GM12878 (cell line): ENCODE measurements at regions of chr4 and their contacts with region 1.

Region 1: DNA sequence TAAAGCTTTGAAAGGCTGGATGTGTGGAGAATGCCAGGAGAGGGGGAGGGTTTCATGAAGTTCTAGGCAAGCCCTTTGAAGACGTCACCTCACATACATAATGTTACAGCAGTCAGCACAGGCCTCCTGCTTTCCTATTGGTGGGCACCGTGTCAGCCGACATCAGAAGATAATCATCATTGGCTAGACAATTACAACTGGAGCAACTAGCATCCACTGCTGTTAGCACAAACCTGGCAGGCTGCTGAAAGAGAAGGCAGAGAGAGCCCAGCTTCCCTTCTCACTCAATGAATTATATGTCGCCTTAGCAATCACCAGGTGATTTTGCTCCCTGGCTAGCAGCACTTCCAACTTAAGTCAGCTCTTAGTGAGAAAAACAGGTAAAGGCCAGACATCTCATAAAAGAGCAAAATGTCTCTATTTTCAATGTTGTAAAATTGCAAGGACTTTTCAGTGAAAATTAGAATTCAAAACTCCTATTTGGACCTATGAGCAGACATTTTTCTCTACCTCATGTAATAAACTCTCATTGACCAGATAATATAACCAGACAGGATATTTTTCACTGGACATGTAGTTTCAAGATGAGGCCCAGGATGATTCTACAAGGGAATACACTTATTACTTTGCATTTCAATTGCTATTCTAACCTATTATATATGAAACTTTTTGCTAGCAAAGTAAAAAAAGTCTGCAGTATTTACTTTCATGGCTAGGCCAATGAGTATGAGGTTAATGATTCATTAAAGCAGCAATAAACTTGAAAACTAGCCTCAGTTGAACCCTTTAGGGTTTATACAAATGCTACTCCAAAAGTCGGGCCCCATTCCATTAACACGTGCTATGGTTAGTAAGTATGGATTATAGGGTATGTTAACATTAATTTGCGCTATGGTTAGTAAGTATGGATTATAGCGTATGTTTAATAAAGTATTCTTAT is 4.3 kb downstream of the ELOVL6 start:
- DNase-seq: peak; percentile 95
- ATAC-seq: peak; percentile 74
- H3K4me3 ChIP-seq: no peak overlapping the region
- H3K27ac ChIP-seq: peak overlapping the region; percentile 75
- H3K4me1 ChIP-seq: peaks cover 19% of the 10 kb centered on the region
- H3K27me3 ChIP-seq: no peaks in the 10 kb centered on the region
- CTCF ChIP-seq: no peak
- EP300 ChIP-seq: no peak
- POLR2A ChIP-seq: peak; percentile 89
- RAD21 ChIP-seq: no peak

Region 2: GRCh38 chr4:108620101-108620932 is 1573.8 kb before region 1 on chr4 and contains the start of gene RPL34:
- CTCF ChIA-PET with region 1: no interaction called
- POLR2A ChIA-PET with region 1: no interaction called
- RAD21 ChIA-PET with region 1: no interaction called
- SMC1A ChIA-PET with region 1: no interaction called
- in situ Hi-C with region 1: no loop called
- intact Hi-C with region 1: loop called (anchors 5 kb)
- DNase-seq: peak; percentile 98
- ATAC-seq: peak; percentile 98
- H3K4me3 ChIP-seq: peak within 1 kb of the TSS; percentile 92
- H3K27ac ChIP-seq: peak within 1 kb of the TSS; percentile 95
- H3K4me1 ChIP-seq: peaks cover 8% of the 10 kb centered on the region; the same call in 1 of the 2 replicates
- H3K27me3 ChIP-seq: no peaks in the 10 kb centered on the region
- CTCF ChIP-seq: no peak
- EP300 ChIP-seq: no peak; a peak in 1 of 4 replicates
- POLR2A ChIP-seq: peak; percentile 96
- RAD21 ChIP-seq: no peak
- polyA plus RNA-seq, gene RPL34: 6,449 to 6,697 TPM

Region 3: DNA sequence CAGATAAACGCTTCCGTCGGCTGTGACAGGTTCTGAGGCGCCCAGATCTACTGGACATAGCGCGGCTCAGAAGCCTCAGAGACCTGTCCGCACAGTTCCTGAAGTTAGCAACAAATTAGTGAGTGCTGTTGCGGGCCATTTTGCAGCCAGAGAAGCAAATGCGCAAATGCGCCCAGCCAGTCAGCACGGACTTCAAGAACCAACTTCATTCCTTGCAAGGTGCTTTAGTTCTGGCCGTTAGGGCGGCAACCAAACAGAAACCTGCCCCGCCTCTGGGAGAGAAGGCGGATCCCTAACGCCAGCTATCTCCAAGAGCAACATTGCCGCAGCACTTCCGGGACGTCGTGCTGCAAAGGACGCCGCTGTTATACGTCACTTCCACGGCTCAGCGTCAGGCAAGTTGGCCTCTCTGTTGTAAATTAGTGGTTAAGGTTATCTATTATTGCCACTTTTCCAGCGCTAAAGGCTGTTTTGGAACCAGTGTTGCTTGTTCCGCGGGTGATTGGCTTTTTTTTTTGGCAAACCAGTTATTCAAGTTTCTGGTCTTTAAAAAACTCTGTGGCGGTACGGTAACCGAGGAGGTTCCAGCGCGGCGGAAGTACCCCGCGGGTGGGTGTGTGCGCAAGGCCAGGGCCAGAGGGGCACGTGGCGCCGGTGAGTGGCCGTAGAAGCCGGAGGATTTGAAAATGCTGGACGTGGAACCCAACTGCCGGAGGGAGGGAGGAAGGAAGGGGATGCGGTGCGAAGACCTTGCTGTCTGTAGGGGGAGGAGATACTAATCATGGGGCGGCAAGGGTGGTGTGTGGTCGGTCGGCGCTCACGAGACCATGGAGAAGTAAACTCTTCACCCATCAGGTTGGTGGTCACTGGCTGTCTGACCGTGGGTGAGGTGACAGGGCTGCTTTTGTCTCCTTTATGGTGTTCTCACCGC is 378.7 kb before region 1 on chr4 and contains the start of gene GAR1:
- CTCF ChIA-PET with region 1: no interaction called
- POLR2A ChIA-PET with region 1: no interaction called
- RAD21 ChIA-PET with region 1: no interaction called
- SMC1A ChIA-PET with region 1: no interaction called
- in situ Hi-C with region 1: no loop called
- intact Hi-C with region 1: loop called (anchors 10 kb)
- DNase-seq: peak; percentile 72
- ATAC-seq: peak; percentile 94
- H3K4me3 ChIP-seq: peak within 1 kb of the TSS; percentile 96
- H3K27ac ChIP-seq: peak within 1 kb of the TSS; percentile 91
- H3K4me1 ChIP-seq: no peaks in the 10 kb centered on the region
- H3K27me3 ChIP-seq: no peaks in the 10 kb centered on the region
- CTCF ChIP-seq: 0 out of 6 replicates have a peak, but pooled peaks of 1 of the 3 experiments have one; percentile 2
- EP300 ChIP-seq: peak in 1 of 2 experiments; percentile 19; a peak in 1 of 4 replicates
- POLR2A ChIP-seq: peak; percentile 81; the same call in 1 of the 2 replicates
- RAD21 ChIP-seq: no peak
- polyA plus RNA-seq, gene GAR1: 16.6 to 20.5 TPM

Region 4: DNA sequence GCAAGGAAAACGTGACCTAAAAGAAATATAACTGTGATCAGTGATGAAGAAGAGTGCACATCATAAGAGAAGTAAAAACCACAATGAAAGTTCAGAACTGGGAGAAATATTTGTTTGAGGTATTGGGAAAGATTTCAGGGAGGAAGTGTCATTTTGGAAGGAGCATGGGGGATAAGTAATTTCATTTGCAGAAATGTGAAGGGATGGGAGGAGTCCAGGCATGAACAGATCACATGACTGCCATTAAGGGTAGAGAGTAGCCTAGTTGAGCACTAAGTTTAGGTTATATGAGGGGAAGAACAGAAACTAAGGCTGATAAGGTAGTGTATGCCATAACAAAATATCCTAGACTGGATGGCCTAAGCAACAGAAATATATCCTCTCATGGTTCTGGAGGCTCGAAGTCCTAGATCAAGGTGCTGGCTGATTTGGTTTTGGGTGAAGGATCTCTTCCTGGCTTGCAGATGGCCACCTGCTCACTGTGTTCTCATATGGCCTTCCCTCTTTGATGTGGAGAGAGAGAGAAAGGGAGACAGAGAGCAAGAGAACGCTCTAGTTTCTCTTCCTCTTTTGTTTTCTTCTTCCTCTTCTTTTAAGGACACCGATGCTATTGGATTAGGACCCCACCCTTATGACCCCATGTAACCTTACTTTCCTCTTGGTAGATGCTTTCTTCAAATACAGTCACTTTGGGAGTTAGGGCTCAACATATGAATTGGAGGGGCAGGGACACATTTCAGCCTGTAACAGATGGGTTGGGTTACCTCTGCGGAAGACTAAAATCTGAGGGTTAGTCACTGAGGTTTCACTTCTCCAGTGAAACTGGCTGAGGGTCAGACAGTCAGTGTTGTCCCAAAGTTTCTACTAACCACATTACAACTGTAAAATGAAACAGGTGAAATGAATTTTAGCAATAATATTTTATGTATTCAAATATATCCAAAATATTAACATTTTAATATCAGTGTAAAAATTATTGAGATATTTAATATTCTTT is 203.5 kb before region 1 on chr4:
- CTCF ChIA-PET with region 1: no interaction called
- POLR2A ChIA-PET with region 1: no interaction called
- RAD21 ChIA-PET with region 1: no interaction called
- SMC1A ChIA-PET with region 1: no interaction called
- in situ Hi-C with region 1: no loop called
- intact Hi-C with region 1: loop called (anchors 5 kb)
- DNase-seq: peak; percentile 87
- ATAC-seq: peak; percentile 88
- H3K4me3 ChIP-seq: peak overlapping the region; percentile 30; the same call in 1 of the 2 replicates
- H3K27ac ChIP-seq: peak overlapping the region; percentile 73
- H3K4me1 ChIP-seq: peaks cover 36% of the 10 kb centered on the region
- H3K27me3 ChIP-seq: no peaks in the 10 kb centered on the region
- CTCF ChIP-seq: no peak
- EP300 ChIP-seq: peak; percentile 79 to 90
- POLR2A ChIP-seq: no peak
- RAD21 ChIP-seq: no peak

Region 5: GRCh38 chr4:110106928-110107296 is 87.2 kb before region 1 on chr4:
- CTCF ChIA-PET with region 1: no interaction called
- POLR2A ChIA-PET with region 1: interaction called, 3 read pairs
- RAD21 ChIA-PET with region 1: interaction called, 3 read pairs
- SMC1A ChIA-PET with region 1: interaction called, 3 read pairs
- in situ Hi-C with region 1: no loop called
- intact Hi-C with region 1: loop called (anchors 5 kb)
- DNase-seq: no peak
- ATAC-seq: peak; percentile 79
- H3K4me3 ChIP-seq: no peak overlapping the region
- H3K27ac ChIP-seq: peak overlapping the region; percentile 14; the same call in 1 of the 2 replicates
- H3K4me1 ChIP-seq: peaks cover 26% of the 10 kb centered on the region
- H3K27me3 ChIP-seq: no peaks in the 10 kb centered on the region
- CTCF ChIP-seq: no peak
- EP300 ChIP-seq: peak in 1 of 2 experiments; percentile 30; a peak in 1 of 4 replicates
- POLR2A ChIP-seq: no peak
- RAD21 ChIP-seq: no peak

Region 6: GRCh38 chr4:110287130-110287529 is 93.0 kb after region 1 on chr4:
- CTCF ChIA-PET with region 1: interaction called, 3 read pairs
- POLR2A ChIA-PET with region 1: interaction called, 8 read pairs
- RAD21 ChIA-PET with region 1: interaction called, 5 read pairs
- SMC1A ChIA-PET with region 1: interaction called, 5 read pairs
- in situ Hi-C with region 1: no loop called
- intact Hi-C with region 1: loop called (anchors 1 kb)
- DNase-seq: peak; percentile 83
- ATAC-seq: peak; percentile 99
- H3K4me3 ChIP-seq: no peak overlapping the region
- H3K27ac ChIP-seq: peak overlapping the region; percentile 49
- H3K4me1 ChIP-seq: peaks cover 14% of the 10 kb centered on the region
- H3K27me3 ChIP-seq: no peaks in the 10 kb centered on the region
- CTCF ChIP-seq: no peak
- EP300 ChIP-seq: peak; percentile 51 to 81
- POLR2A ChIP-seq: no peak
- RAD21 ChIP-seq: 0 out of 2 replicates have a peak, but pooled peaks have one; percentile 16